Body of pancreas (tissue), 4 donors: ENCODE measurements at regions of chr7 and their contacts with region 1.

Region 1: GRCh38 chr7:43700059-43700501 is 29.2 kb downstream of the COA1 start:
- DNase-seq: no peak
- ATAC-seq: peak; percentile 85
- H3K4me3 ChIP-seq: no peak overlapping the region
- H3K27ac ChIP-seq: no peak overlapping the region
- H3K4me1 ChIP-seq: peaks cover 17% of the 10 kb centered on the region
- H3K27me3 ChIP-seq: no peaks in the 10 kb centered on the region
- CTCF ChIP-seq: peak; percentile 41 to 88 (median 79)
- POLR2A ChIP-seq: no peak

Region 2: DNA sequence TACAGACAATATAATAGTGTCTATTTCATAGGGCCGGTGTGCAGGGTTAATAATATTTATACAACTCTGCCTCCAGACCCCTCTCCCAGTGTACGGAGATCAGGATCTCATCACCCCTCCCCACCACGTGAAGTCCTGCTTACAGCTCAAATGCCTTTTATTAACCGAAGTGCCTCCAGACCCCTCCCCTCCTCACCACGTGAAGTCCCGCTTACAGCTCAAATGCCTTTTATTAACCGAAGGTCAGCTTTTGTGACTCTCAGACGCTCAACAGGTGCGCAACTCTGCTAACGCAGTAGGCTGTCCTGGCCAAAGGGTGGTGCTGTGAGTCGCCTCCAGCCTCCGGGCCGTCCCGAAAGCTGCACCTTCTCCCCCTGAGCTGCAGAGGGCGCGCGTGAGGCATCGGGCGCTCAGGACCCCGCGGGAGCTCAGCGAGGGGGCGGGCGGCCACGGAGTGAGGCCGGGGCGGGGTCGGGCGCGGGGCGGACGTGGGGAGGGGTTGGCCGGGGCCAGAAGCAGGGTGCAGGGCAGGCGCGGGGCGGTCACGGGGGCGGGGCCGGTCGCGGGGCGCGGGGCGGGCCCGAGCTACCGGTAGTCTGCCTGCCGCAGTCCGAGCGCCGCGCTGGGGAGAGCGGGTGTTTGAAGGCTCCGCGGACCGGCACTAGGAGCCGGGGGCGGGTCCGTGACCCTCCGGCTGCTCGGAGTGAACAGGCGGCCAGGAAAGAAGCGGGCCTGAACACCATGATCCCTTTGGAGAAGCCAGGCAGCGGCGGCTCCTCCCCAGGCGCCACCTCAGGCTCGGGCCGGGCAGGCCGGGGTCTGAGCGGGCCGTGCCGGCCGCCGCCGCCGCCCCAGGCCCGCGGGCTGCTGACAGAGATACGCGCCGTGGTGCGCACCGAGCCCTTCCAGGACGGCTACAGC is 117.3 kb before region 1 on chr7 and contains the start of gene STK17A:
- intact Hi-C with region 1: loop called (anchors 5 kb)
- DNase-seq: peak; percentile 92 to 94 (median 94)
- ATAC-seq: peak; percentile 89
- H3K4me3 ChIP-seq: peak within 1 kb of the TSS; percentile 46 to 56
- H3K27ac ChIP-seq: peak within 1 kb of the TSS; percentile 90 to 97 (median 95)
- H3K4me1 ChIP-seq: peaks cover 40% of the 10 kb centered on the region
- H3K27me3 ChIP-seq: no peaks in the 10 kb centered on the region
- CTCF ChIP-seq: peak; percentile 97 to 100 (median 100)
- POLR2A ChIP-seq: peak; percentile 88 to 92 (median 91)
- total RNA-seq, gene STK17A: 8.6 to 18.7 TPM

Region 3: DNA sequence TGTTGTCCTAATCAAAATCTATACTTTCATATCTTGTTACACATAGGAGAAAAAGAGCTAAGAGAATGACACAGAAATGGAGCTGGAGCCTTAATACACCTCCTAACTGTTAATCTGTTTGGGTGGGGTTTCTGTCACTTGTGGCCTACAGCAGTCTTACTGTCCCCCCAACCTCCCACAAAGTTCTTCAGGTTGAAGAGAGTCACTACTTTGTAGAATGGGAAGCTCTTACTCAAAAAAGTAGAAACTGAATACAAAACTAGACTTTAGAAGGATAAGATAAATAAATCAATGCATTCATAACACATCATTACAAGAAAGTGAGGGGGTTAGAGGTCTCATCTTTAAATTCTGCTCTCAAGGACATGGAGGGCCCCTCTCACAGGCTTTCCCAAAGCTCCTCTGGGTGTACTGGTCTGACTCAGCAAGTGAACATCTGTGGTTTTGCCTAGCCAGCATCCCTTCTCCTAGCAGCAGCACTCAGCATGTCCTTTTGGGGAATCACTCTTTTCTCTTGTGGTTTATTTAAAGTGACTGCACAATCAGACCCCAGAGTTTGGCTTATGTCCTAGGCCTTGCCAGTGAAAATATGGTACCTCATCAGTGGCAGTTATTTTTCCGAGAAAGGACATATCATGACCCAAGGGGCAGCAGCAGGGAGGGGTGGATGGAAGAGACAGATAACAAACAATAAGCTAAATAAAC is 56.4 kb after region 1 on chr7:
- intact Hi-C with region 1: no loop called
- DNase-seq: peak in 1 of 4 donors; percentile 43
- ATAC-seq: no peak
- H3K4me3 ChIP-seq: no peak overlapping the region
- H3K27ac ChIP-seq: no peak overlapping the region
- H3K4me1 ChIP-seq: peaks cover 12% of the 10 kb centered on the region
- H3K27me3 ChIP-seq: no peaks in the 10 kb centered on the region
- CTCF ChIP-seq: no peak
- POLR2A ChIP-seq: no peak

Region 4: DNA sequence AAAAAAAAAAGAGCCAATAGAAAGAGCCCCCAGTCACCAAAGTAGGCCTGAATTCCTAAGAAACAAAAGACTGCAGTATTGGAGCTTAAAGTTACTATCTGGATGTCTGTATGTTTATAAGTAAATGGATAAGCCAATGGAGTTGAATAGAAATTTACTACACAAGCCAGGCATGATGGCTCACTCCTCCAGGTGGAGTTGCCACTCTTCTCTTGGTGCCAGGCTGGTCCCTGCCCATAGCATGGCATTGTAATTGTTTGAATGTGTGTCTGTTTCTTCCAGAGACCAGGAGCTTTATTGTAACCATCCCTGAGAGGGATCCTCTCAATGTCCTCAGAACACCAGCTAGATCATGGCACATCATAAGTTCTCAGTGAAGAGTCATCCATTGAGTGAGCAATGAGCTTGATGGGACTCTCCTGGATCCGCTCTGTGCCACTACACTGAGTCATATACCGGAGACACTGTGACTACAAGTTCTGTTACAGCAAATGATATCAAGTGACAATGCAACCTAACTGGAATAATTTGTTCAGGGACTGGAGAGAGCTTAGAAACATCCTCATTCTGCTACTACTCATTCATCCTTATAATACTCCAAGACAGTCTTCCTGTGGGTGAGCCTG is 144.1 kb after region 1 on chr7:
- intact Hi-C with region 1: no loop called
- DNase-seq: no peak
- ATAC-seq: no peak
- H3K4me3 ChIP-seq: no peak overlapping the region
- H3K27ac ChIP-seq: no peak overlapping the region
- H3K4me1 ChIP-seq: peaks cover 2% of the 10 kb centered on the region
- H3K27me3 ChIP-seq: no peaks in the 10 kb centered on the region
- CTCF ChIP-seq: no peak
- POLR2A ChIP-seq: no peak